ENCODE measurements at regions of chr3 and their contacts with region 1.

Region 1: DNA sequence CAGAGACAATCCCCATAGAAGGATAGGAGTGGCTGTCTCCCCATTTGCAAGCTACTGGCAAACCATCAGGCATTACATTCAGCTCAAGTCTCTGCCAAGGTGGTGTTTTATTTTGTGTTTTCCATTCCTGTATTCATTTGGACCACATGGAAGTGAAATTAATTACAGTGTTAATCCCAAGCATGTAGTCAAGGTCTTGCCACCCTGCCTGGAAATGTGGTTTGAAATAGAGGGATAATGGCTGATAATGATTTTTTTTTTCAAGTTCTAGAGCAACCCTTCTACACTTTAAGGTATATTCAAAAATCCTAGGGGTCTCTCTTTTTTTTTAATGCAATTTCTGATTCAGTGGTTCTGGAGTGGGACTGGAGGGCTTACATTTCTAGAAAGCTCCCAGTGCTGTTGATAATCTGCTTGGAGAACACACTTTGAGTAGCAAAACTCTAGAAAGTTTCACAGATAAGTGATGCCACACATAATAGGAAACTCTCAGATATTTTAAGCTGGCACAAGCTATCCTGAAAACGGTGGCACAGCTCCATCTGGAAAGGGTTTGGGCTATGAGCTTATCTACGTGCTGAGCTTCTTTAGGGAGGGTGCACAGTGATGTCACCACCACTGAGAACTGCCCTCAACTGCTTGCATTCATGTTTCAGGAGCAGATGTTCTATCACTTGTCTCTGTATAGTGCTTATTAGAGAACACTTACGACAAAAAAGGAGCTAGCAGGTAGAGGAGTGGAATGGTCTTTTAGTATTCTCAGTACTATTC is 140.1 kb upstream of the IL12A start:
- DNase-seq: no peak
- H3K4me3 ChIP-seq: no peak overlapping the region
- H3K27ac ChIP-seq: no peak overlapping the region
- H3K4me1 ChIP-seq: peaks cover 15% of the 10 kb centered on the region
- H3K27me3 ChIP-seq: no peaks in the 10 kb centered on the region
- CTCF ChIP-seq: no peak

Region 2: DNA sequence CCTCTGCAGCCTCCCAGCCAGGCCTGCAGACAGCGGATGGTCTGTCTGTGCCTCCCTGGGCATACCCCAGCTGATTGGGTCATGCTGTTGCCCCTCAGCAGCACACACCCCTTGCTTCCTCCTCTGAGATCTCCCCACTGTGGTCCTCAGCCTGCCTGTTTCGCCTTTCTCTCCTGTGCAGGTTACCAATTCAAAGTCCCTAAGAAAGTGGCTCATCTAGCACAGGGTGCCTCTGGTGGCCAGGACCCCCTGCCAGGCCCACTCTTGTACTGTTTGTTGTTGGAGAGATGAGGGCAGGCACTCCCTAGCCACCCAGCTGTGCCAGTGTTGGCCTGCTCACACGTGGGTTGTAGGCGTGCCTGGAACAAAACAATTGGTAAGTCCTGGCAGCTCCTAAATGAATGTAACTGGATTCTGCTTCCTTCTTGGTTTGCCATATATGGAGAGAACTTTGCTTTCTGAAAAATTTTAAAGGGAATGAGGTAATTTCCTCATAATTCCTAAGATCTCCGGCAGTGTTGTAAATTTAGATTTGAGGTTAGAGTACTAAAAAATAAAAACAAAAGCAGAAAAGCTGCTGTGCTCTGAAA is 73.1 kb before region 1 on chr3:
- CTCF ChIA-PET with region 1: no interaction called
- POLR2A ChIA-PET with region 1: no interaction called
- intact Hi-C with region 1: loop called (anchors 2 kb)
- DNase-seq: peak; percentile 56 to 61
- H3K4me3 ChIP-seq: no peak overlapping the region
- H3K27ac ChIP-seq: no peak overlapping the region
- H3K4me1 ChIP-seq: peaks cover 23% of the 10 kb centered on the region
- H3K27me3 ChIP-seq: no peaks in the 10 kb centered on the region
- CTCF ChIP-seq: no peak